Right ventricle myocardium superior (tissue), 1 donor: ENCODE measurements at regions of chr13 and their contacts with region 1.

Region 1: GRCh38 chr13:20197361-20197834 is 4.7 kb upstream of the GJB2 start:
- DNase-seq: no peak
- ATAC-seq: peak; percentile 54

Region 2: GRCh38 chr13:19362946-19363510 is 834.4 kb before region 1 on chr13:
- intact Hi-C with region 1: no loop called
- DNase-seq: no peak
- ATAC-seq: no peak

Region 3: GRCh38 chr13:20489185-20489820 is 291.9 kb after region 1 on chr13:
- intact Hi-C with region 1: loop called (anchors 5 kb)
- DNase-seq: no peak
- ATAC-seq: no peak